CD8-positive, alpha-beta T cell (primary cell): ENCODE measurements at regions of chr2 and their contacts with region 1.

Region 1: DNA sequence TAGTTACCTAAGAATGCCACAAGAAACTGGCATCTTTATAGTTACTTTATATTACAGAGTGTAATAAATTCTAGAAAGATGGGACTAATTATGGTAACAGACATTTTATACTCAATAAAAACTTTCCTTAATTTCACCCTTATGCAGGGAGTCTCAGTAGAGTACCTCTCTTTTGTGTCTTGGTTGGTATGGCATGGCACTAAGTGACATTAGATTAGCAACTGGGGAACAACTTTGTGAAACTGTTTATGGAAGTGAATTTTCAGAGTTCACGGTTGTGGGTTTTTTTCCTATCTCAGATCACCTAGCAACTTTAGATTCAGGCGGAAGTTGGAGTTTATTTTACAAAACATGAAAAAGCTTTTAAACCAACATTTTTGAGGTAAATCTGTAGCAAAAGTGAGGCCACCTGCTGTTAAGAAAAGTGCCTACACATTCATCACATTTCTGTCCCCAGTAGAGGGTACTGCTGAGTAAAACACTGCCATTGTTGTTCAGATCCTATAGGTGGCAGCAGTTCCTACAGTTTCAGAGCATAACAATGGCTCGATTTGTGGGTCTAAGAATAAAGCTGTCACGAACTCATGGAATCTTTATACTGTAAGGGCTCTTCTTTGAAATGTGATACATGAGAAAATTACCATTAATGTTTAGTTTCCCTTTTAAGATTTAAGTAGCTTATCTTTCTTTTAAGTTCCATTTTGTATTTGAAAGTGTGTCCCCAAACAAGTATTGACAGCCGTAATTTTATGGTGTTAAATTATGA is 117.6 kb downstream of the CAMKMT start:
- DNase-seq: peak in 8 of 9 experiments; percentile 1 to 82 (median 26)
- ATAC-seq: peak; percentile 100
- H3K4me3 ChIP-seq: no peak overlapping the region
- H3K4me3 Mint-ChIP-seq: no peak overlapping the region
- H3K27ac ChIP-seq: no peak overlapping the region
- H3K27ac Mint-ChIP-seq: no peak overlapping the region
- H3K4me1 ChIP-seq: no peaks in the 10 kb centered on the region
- H3K4me1 Mint-ChIP-seq: peaks cover 9% of the 10 kb centered on the region
- H3K27me3 ChIP-seq: peaks cover 0 to 2% of the 10 kb centered on the region in 2 experiments
- H3K27me3 Mint-ChIP-seq: no peaks in the 10 kb centered on the region
- CTCF ChIP-seq: peak; percentile 100

Region 2: DNA sequence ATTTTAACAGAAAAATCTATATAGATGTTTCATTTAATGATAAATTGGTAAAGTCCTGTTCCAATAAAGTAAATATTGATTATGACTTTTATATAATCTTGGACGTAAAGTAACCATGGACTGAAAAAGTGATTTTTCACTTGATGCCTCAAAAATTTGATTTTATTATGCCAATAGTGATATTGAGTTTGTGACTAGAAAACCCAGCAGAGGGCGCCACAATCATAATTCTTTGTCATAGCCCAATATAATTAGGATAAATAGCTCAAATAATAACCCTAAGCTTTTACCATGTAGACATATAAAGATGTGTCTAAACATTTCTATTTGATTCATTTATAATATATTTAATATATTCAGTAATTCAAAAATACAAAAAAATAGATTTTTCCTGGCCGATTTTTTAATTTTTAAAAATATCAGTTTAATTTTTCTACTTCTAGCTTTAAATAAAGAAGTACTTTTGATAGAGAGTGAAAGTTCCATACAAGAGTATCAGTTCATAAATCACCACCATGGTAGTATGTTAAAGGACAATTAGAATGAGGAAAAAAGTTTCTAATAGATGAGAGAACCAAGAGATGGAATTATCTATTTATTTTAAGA is 86.9 kb before region 1 on chr2:
- CTCF ChIA-PET with region 1: interaction called, 5 read pairs
- POLR2A ChIA-PET with region 1: no interaction called
- intact Hi-C with region 1: loop called in 1 of 2 experiments (anchors 5 kb)
- DNase-seq: peak in 8 of 9 experiments; percentile 11 to 60 (median 52)
- ATAC-seq: no peak
- H3K4me3 ChIP-seq: no peak overlapping the region
- H3K4me3 Mint-ChIP-seq: no peak overlapping the region
- H3K27ac ChIP-seq: no peak overlapping the region
- H3K27ac Mint-ChIP-seq: no peak overlapping the region
- H3K4me1 ChIP-seq: no peaks in the 10 kb centered on the region
- H3K4me1 Mint-ChIP-seq: peaks cover 6% of the 10 kb centered on the region
- H3K27me3 ChIP-seq: no peaks in the 10 kb centered on the region
- H3K27me3 Mint-ChIP-seq: no peaks in the 10 kb centered on the region
- CTCF ChIP-seq: peak; percentile 77

Region 3: DNA sequence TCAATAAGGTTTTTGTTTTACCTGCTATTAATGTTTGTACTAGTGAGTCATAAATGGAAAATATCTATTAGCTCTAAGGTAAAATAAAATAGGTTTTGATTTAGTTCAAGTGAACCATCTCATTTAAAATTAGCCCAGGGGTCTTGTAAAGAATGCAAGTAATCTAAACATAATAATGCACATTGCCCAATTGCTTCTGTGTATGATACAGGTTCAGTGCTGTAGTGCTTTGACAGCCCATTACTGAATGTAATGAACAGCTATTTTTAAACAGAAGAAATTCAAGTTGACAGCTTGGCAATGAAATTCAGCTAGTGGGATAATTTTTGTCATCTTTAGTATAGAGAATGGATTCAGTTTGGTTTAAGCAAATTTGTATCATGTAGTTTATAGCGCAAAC is 26.0 kb before region 1 on chr2:
- CTCF ChIA-PET with region 1: interaction called, 12 read pairs
- POLR2A ChIA-PET with region 1: no interaction called
- intact Hi-C with region 1: no loop called
- DNase-seq: no peak
- ATAC-seq: no peak
- H3K4me3 ChIP-seq: no peak overlapping the region
- H3K4me3 Mint-ChIP-seq: no peak overlapping the region
- H3K27ac ChIP-seq: no peak overlapping the region
- H3K27ac Mint-ChIP-seq: no peak overlapping the region
- H3K4me1 ChIP-seq: no peaks in the 10 kb centered on the region
- H3K4me1 Mint-ChIP-seq: no peaks in the 10 kb centered on the region
- H3K27me3 ChIP-seq: no peaks in the 10 kb centered on the region
- H3K27me3 Mint-ChIP-seq: no peaks in the 10 kb centered on the region
- CTCF ChIP-seq: no peak

Region 4: DNA sequence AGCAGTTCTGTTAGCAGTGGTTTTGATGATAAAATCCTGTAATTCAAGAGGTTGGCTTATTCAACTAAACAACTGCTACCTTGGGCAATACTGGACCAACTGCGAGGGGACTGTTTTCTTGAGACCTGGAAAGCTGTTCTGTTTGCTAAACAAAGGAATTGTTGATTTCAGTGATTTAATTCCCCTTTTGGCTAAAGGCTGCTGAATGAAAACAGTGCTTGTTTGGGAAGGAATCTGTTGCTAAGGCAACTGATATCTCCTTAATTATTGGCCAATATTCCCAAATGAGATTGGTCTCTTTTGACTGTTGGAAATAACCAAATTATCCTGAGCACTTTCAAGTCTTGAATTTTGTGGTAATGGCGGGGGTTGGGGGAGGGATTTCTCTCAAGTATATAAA is 19.2 kb after region 1 on chr2:
- CTCF ChIA-PET with region 1: interaction called, 27 read pairs
- POLR2A ChIA-PET with region 1: interaction called, 3 read pairs
- intact Hi-C with region 1: no loop called
- DNase-seq: no peak
- ATAC-seq: no peak
- H3K4me3 ChIP-seq: no peak overlapping the region
- H3K4me3 Mint-ChIP-seq: no peak overlapping the region
- H3K27ac ChIP-seq: no peak overlapping the region
- H3K27ac Mint-ChIP-seq: no peak overlapping the region
- H3K4me1 ChIP-seq: no peaks in the 10 kb centered on the region
- H3K4me1 Mint-ChIP-seq: no peaks in the 10 kb centered on the region
- H3K27me3 ChIP-seq: no peaks in the 10 kb centered on the region
- H3K27me3 Mint-ChIP-seq: no peaks in the 10 kb centered on the region
- CTCF ChIP-seq: no peak

Region 5: DNA sequence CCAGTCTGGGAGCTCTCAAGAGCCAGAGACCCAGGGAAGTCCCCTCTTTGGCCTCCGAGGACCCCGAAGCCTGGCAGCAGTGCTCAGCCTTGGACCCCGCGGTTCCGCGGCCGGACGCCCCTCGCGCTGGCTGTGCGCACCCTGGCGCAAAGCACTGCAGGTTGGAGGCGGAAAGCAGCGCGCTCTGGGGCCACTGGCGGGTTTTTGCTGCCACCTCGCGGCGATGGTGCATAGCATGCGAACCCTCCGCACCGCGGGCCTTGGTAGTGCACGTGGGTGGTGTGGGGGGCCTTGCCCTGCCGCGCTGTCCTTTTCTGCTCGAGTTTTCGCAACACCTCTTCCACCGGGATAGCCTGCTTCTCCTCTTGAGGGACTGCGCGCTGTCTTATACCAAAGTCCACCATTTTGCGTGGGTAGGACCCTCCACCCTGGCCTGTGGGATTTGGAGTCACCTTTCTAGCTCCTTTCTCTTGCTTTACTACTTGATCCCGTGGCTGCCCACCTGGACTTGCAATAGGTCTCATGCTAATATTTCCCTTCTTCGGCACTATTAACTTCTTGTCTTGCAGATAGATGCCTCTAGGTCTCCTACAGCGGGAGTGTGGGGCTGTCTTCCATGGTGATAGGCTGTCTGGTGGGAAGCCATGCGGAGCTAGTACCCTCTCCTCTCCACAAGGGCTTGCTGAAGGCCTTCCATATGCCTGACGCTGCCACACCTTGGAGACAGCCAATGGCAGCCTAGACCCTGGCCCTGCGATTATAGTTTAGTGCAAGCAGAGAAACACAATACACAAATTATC is 476.5 kb after region 1 on chr2:
- CTCF ChIA-PET with region 1: interaction called, 51 read pairs
- POLR2A ChIA-PET with region 1: no interaction called
- intact Hi-C with region 1: loop called in 1 of 2 experiments (anchors 1 kb)
- DNase-seq: peak; percentile 55 to 83 (median 66)
- ATAC-seq: peak; percentile 86
- H3K4me3 ChIP-seq: peak overlapping the region in 1 of 2 experiments; percentile 27
- H3K4me3 Mint-ChIP-seq: peak overlapping the region; percentile 22
- H3K27ac ChIP-seq: no peak overlapping the region
- H3K27ac Mint-ChIP-seq: no peak overlapping the region
- H3K4me1 ChIP-seq: peaks cover 18% of the 10 kb centered on the region
- H3K4me1 Mint-ChIP-seq: peaks cover 25% of the 10 kb centered on the region
- H3K27me3 ChIP-seq: peaks cover 13% of the 10 kb centered on the region in 2 experiments
- H3K27me3 Mint-ChIP-seq: peaks cover 58% of the 10 kb centered on the region
- CTCF ChIP-seq: peak; percentile 69